ENCODE measurements at regions of chr6 and their contacts with region 1.

Region 1: GRCh38 chr6:116287689-116288282 is 8.1 kb upstream of the TSPYL1 start:
- DNase-seq: peak; percentile 67
- ATAC-seq: peak; percentile 76
- H3K4me3 ChIP-seq: no peak overlapping the region
- H3K4me3 Mint-ChIP-seq: no peak overlapping the region
- H3K27ac ChIP-seq: no peak overlapping the region
- H3K27ac Mint-ChIP-seq: no peak overlapping the region
- H3K4me1 ChIP-seq: no peaks in the 10 kb centered on the region
- H3K4me1 Mint-ChIP-seq: peaks cover 5% of the 10 kb centered on the region
- H3K27me3 ChIP-seq: no peaks in the 10 kb centered on the region
- H3K27me3 Mint-ChIP-seq: no peaks in the 10 kb centered on the region
- CTCF ChIP-seq: peak; percentile 99

Region 2: GRCh38 chr6:116165596-116165995 is 122.2 kb before region 1 on chr6:
- CTCF ChIA-PET with region 1: no interaction called
- POLR2A ChIA-PET with region 1: no interaction called
- intact Hi-C with region 1: no loop called
- DNase-seq: peak; percentile 59
- ATAC-seq: peak; percentile 99
- H3K4me3 ChIP-seq: no peak overlapping the region
- H3K4me3 Mint-ChIP-seq: peak overlapping the region; percentile 23
- H3K27ac ChIP-seq: no peak overlapping the region
- H3K27ac Mint-ChIP-seq: no peak overlapping the region
- H3K4me1 ChIP-seq: peaks cover 7 to 13% of the 10 kb centered on the region in 2 donors
- H3K4me1 Mint-ChIP-seq: peaks cover 42% of the 10 kb centered on the region
- H3K27me3 ChIP-seq: no peaks in the 10 kb centered on the region
- H3K27me3 Mint-ChIP-seq: no peaks in the 10 kb centered on the region
- CTCF ChIP-seq: no peak

Region 3: DNA sequence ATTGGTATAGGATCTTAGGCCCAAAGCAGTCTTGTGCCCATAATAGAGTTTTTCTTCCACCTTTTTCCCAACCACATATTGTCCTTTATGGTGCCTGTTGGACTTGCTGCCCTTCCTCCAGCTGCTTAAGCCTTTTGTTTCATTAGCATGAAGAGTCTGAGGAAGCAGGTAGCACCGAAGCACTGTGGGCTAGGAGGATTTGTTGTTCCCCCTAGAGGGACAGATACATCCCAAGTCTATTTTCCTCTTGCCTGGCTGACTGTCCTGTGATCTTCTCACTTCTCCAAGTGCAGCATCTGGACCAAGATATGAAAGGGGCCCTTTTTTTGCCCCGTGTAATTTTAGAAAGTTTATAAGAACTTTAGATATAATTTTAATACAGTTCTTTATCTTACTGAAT is 111.2 kb before region 1 on chr6:
- CTCF ChIA-PET with region 1: no interaction called
- POLR2A ChIA-PET with region 1: no interaction called
- intact Hi-C with region 1: no loop called
- DNase-seq: no peak
- ATAC-seq: no peak
- H3K4me3 ChIP-seq: no peak overlapping the region
- H3K4me3 Mint-ChIP-seq: no peak overlapping the region
- H3K27ac ChIP-seq: no peak overlapping the region
- H3K27ac Mint-ChIP-seq: no peak overlapping the region
- H3K4me1 ChIP-seq: no peaks in the 10 kb centered on the region
- H3K4me1 Mint-ChIP-seq: no peaks in the 10 kb centered on the region
- H3K27me3 ChIP-seq: no peaks in the 10 kb centered on the region
- H3K27me3 Mint-ChIP-seq: no peaks in the 10 kb centered on the region
- CTCF ChIP-seq: no peak

Region 4: DNA sequence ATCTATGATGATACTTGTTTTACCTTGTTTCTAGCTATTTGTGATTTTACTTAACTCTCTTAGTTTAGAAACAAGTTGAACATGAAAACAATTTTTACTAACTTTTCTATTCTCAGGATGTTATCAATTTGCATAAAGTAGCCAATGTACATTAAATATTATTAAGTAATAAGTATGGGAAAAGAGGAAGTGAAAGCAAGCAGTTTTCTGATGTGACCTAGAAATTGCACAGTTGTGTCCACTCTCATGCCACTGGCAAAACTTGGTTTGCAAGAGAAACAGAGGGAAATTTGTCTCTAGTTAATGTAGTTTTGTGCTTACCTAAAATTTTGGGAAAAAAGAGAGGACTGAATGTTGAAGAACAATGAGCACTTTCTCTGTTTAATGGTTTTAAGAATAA is 11.2 kb after region 1 on chr6:
- CTCF ChIA-PET with region 1: interaction called, 19 read pairs
- POLR2A ChIA-PET with region 1: no interaction called
- intact Hi-C with region 1: no loop called
- DNase-seq: no peak
- ATAC-seq: no peak
- H3K4me3 ChIP-seq: no peak overlapping the region
- H3K4me3 Mint-ChIP-seq: no peak overlapping the region
- H3K27ac ChIP-seq: no peak overlapping the region
- H3K27ac Mint-ChIP-seq: no peak overlapping the region
- H3K4me1 ChIP-seq: peaks cover 4 to 6% of the 10 kb centered on the region in 2 donors
- H3K4me1 Mint-ChIP-seq: peaks cover 11% of the 10 kb centered on the region
- H3K27me3 ChIP-seq: no peaks in the 10 kb centered on the region
- H3K27me3 Mint-ChIP-seq: no peaks in the 10 kb centered on the region
- CTCF ChIP-seq: no peak

Region 5: DNA sequence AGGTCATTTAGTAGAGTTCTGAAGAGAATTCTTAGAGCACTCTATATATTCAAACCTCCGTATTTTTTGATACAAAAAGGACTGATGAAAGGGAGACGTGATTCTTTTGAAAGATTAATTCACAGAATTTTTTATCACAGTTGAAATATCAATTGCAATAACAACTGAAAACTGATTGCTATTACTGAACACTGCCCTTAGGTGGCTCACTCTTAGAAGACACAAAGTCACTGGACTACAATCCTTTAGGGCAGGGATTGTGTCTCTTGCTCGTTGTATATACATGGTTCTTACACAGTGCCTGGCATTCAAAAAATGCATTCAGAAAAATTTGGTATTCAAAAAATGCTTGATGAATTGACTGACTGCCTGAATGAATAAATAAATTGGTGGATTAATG is 156.3 kb after region 1 on chr6:
- CTCF ChIA-PET with region 1: interaction called, 86 read pairs
- POLR2A ChIA-PET with region 1: no interaction called
- intact Hi-C with region 1: loop called (anchors 5 kb)
- DNase-seq: peak; percentile 56
- ATAC-seq: peak; percentile 86
- H3K4me3 ChIP-seq: no peak overlapping the region
- H3K4me3 Mint-ChIP-seq: no peak overlapping the region
- H3K27ac ChIP-seq: no peak overlapping the region
- H3K27ac Mint-ChIP-seq: no peak overlapping the region
- H3K4me1 ChIP-seq: peaks cover 16 to 23% of the 10 kb centered on the region in 2 donors
- H3K4me1 Mint-ChIP-seq: peaks cover 27% of the 10 kb centered on the region
- H3K27me3 ChIP-seq: no peaks in the 10 kb centered on the region
- H3K27me3 Mint-ChIP-seq: no peaks in the 10 kb centered on the region
- CTCF ChIP-seq: peak; percentile 75

Region 6: GRCh38 chr6:116511404-116512110 is 223.8 kb after region 1 on chr6 and contains the start of gene CALHM5:
- CTCF ChIA-PET with region 1: interaction called, 21 read pairs
- POLR2A ChIA-PET with region 1: no interaction called
- intact Hi-C with region 1: no loop called
- DNase-seq: no peak
- ATAC-seq: no peak
- H3K4me3 ChIP-seq: no peak within 1 kb of the TSS
- H3K4me3 Mint-ChIP-seq: no peak within 1 kb of the TSS
- H3K27ac ChIP-seq: peak within 1 kb of the TSS in 1 of 2 donors; percentile 5
- H3K27ac Mint-ChIP-seq: no peak within 1 kb of the TSS
- H3K4me1 ChIP-seq: peaks cover 5 to 6% of the 10 kb centered on the region in 2 donors
- H3K4me1 Mint-ChIP-seq: peaks cover 18% of the 10 kb centered on the region
- H3K27me3 ChIP-seq: no peaks in the 10 kb centered on the region
- H3K27me3 Mint-ChIP-seq: no peaks in the 10 kb centered on the region
- CTCF ChIP-seq: no peak
- total RNA-seq, gene CALHM5: not detected in 2 replicates

Region 7: GRCh38 chr6:116561377-116562018 is 273.7 kb after region 1 on chr6:
- CTCF ChIA-PET with region 1: interaction called, 62 read pairs
- POLR2A ChIA-PET with region 1: interaction called, 7 read pairs
- intact Hi-C with region 1: loop called (anchors 1 kb)
- DNase-seq: peak; percentile 78
- ATAC-seq: peak; percentile 82
- H3K4me3 ChIP-seq: no peak overlapping the region
- H3K4me3 Mint-ChIP-seq: no peak overlapping the region
- H3K27ac ChIP-seq: no peak overlapping the region
- H3K27ac Mint-ChIP-seq: no peak overlapping the region
- H3K4me1 ChIP-seq: peaks cover 5 to 7% of the 10 kb centered on the region in 2 donors
- H3K4me1 Mint-ChIP-seq: peaks cover 4% of the 10 kb centered on the region
- H3K27me3 ChIP-seq: peaks cover 0 to 14% (median 9%) of the 10 kb centered on the region in 4 experiments
- H3K27me3 Mint-ChIP-seq: peaks cover 31% of the 10 kb centered on the region
- CTCF ChIP-seq: peak; percentile 98

Region 8: DNA sequence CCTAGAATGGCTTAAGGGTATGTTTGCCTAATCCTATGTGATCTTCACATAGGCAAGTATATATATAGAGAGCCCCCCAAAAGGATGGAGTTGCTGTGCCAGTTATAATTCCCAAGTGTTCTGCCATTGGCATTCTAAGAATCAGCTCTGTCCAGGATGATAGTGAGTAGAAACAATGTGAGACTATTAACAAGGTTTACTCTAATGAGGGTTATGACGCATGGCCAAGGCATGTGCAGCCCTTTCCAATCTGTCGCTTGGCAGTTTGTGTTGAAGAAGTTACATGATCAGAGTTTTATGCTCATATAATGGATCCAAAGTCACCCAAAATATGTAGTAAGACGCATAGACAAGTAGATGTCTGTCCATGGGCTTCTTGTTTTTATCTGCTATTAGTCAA is 1011.2 kb after region 1 on chr6:
- CTCF ChIA-PET with region 1: no interaction called
- POLR2A ChIA-PET with region 1: no interaction called
- intact Hi-C with region 1: no loop called
- DNase-seq: no peak
- ATAC-seq: no peak
- H3K4me3 ChIP-seq: no peak overlapping the region
- H3K4me3 Mint-ChIP-seq: no peak overlapping the region
- H3K27ac ChIP-seq: no peak overlapping the region
- H3K27ac Mint-ChIP-seq: no peak overlapping the region
- H3K4me1 ChIP-seq: no peaks in the 10 kb centered on the region
- H3K4me1 Mint-ChIP-seq: no peaks in the 10 kb centered on the region
- H3K27me3 ChIP-seq: no peaks in the 10 kb centered on the region
- H3K27me3 Mint-ChIP-seq: no peaks in the 10 kb centered on the region
- CTCF ChIP-seq: no peak